ENCODE measurements at regions of chr20 and their contacts with region 1.

Region 1: DNA sequence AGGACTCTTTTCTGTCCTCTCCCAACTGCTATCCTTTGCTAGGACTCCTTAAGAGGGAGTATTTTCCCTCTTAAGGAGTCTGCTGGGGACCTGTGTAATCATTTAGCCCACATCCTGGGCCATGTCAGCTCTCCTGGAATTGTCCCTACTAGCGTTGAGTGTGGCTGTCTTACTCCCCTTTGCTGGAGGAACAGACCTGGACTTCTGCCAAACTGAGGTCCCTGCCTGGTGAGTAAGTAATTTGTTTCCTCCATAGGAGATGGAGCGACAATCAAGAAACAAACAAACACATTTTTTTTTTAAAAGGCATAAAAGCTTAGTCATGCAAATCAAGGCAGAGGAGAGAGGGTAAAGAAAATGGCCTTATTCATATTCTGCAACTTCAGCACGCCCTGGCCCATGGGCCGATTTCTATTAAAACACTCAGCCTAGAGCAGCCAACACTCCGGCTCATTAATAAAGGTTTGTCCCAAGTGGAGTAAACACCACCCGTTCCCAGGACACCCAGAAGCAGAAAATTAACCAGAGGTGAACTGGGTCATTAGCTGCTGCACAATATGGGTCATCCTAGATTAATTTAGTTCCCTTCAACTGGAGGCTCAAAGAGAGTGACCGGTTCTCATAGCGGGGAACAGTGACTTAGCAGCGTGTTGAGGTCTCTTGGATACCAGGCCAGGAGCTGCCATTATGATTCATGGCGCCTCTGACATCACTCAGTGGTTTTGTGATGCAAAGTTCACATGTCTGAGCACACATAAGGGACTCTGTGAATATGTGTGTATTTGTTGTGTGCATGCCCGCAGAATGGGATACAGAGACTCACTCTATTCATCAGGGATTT is 165.0 kb upstream of the SULF2 start:
- DNase-seq: peak; percentile 97
- ATAC-seq: peak; percentile 75
- H3K4me3 ChIP-seq: no peak overlapping the region
- H3K27ac ChIP-seq: peak overlapping the region; percentile 93
- H3K4me1 ChIP-seq: peaks cover 43% of the 10 kb centered on the region
- H3K27me3 ChIP-seq: no peaks in the 10 kb centered on the region
- CTCF ChIP-seq: peak; percentile 45; the same call in 1 of the 2 replicates

Region 2: GRCh38 chr20:47847868-47848531 is 102.3 kb before region 1 on chr20:
- CTCF ChIA-PET with region 1: no interaction called
- POLR2A ChIA-PET with region 1: interaction called, 3 read pairs
- intact Hi-C with region 1: loop called (anchors 2 kb)
- DNase-seq: peak; percentile 38
- ATAC-seq: peak; percentile 10
- H3K4me3 ChIP-seq: no peak overlapping the region
- H3K27ac ChIP-seq: peak overlapping the region; percentile 83
- H3K4me1 ChIP-seq: peaks cover 50% of the 10 kb centered on the region
- H3K27me3 ChIP-seq: no peaks in the 10 kb centered on the region
- CTCF ChIP-seq: no peak

Region 3: GRCh38 chr20:47905612-47906347 is 44.5 kb before region 1 on chr20:
- CTCF ChIA-PET with region 1: no interaction called
- POLR2A ChIA-PET with region 1: no interaction called
- intact Hi-C with region 1: loop called (anchors 1 kb)
- DNase-seq: no peak
- ATAC-seq: no peak
- H3K4me3 ChIP-seq: no peak overlapping the region
- H3K27ac ChIP-seq: no peak overlapping the region
- H3K4me1 ChIP-seq: peaks cover 18% of the 10 kb centered on the region
- H3K27me3 ChIP-seq: no peaks in the 10 kb centered on the region
- CTCF ChIP-seq: no peak

Region 4: DNA sequence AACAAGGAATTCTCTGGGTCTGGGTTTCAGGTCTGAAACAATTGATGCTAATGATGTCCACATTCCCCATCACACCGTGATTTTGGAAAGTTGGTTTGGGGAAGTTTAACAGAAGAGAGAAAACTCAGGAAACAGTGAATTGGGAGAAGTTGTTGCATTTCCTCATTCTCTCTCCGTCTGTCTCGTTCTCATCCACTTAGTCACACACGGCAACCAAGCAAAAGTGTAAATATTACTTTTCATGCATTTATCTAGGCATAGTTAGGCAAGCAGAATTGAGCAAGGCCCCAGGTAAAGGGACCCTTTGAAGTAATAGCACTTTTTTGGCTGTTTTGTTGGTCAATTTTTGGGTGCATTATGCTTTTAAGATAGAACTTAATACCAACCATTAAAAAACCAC is 28.0 kb before region 1 on chr20:
- CTCF ChIA-PET with region 1: interaction called, 3 read pairs
- POLR2A ChIA-PET with region 1: interaction called, 7 read pairs
- intact Hi-C with region 1: loop called (anchors 1 kb)
- DNase-seq: peak; percentile 86
- ATAC-seq: peak; percentile 69
- H3K4me3 ChIP-seq: peak overlapping the region; percentile 53; the same call in 1 of the 2 replicates
- H3K27ac ChIP-seq: peak overlapping the region; percentile 86
- H3K4me1 ChIP-seq: peaks cover 53% of the 10 kb centered on the region
- H3K27me3 ChIP-seq: no peaks in the 10 kb centered on the region
- CTCF ChIP-seq: no peak

Region 5: GRCh38 chr20:47929363-47930123 is 20.8 kb before region 1 on chr20:
- CTCF ChIA-PET with region 1: no interaction called
- POLR2A ChIA-PET with region 1: no interaction called
- intact Hi-C with region 1: loop called (anchors 2 kb)
- DNase-seq: peak; percentile 92
- ATAC-seq: peak; percentile 64
- H3K4me3 ChIP-seq: no peak overlapping the region
- H3K27ac ChIP-seq: peak overlapping the region; percentile 93
- H3K4me1 ChIP-seq: peaks cover 64% of the 10 kb centered on the region
- H3K27me3 ChIP-seq: no peaks in the 10 kb centered on the region
- CTCF ChIP-seq: no peak

Region 6: GRCh38 chr20:48180184-48180957 is 230.1 kb after region 1 on chr20:
- CTCF ChIA-PET with region 1: no interaction called
- POLR2A ChIA-PET with region 1: no interaction called
- intact Hi-C with region 1: loop called (anchors 2 kb)
- DNase-seq: peak; percentile 93
- ATAC-seq: peak; percentile 94
- H3K4me3 ChIP-seq: peak overlapping the region; percentile 45; the same call in 1 of the 2 replicates
- H3K27ac ChIP-seq: peak overlapping the region; percentile 97
- H3K4me1 ChIP-seq: peaks cover 22% of the 10 kb centered on the region
- H3K27me3 ChIP-seq: no peaks in the 10 kb centered on the region
- CTCF ChIP-seq: no peak